Breast epithelium (tissue), 4 donors: ENCODE measurements at regions of chr12 and their contacts with region 1.

Region 1: GRCh38 chr12:88529531-88530488 is 50.5 kb downstream of the KITLG start:
- DNase-seq: no peak
- H3K4me3 ChIP-seq: no peak overlapping the region
- H3K27ac ChIP-seq: peak overlapping the region in 1 of 2 donors; percentile 23
- H3K4me1 ChIP-seq: no peaks in the 10 kb centered on the region
- H3K27me3 ChIP-seq: no peaks in the 10 kb centered on the region
- CTCF ChIP-seq: no peak
- POLR2A ChIP-seq: no peak

Region 2: GRCh38 chr12:86634456-86635410 is 1895.1 kb before region 1 on chr12:
- intact Hi-C with region 1: no loop called
- DNase-seq: no peak
- H3K4me3 ChIP-seq: no peak overlapping the region
- H3K27ac ChIP-seq: no peak overlapping the region
- H3K4me1 ChIP-seq: no peaks in the 10 kb centered on the region
- H3K27me3 ChIP-seq: no peaks in the 10 kb centered on the region
- CTCF ChIP-seq: no peak
- POLR2A ChIP-seq: no peak

Region 3: GRCh38 chr12:88092771-88093170 is 437.0 kb before region 1 on chr12:
- intact Hi-C with region 1: no loop called
- DNase-seq: no peak
- H3K4me3 ChIP-seq: no peak overlapping the region
- H3K27ac ChIP-seq: no peak overlapping the region
- H3K4me1 ChIP-seq: no peaks in the 10 kb centered on the region
- H3K27me3 ChIP-seq: no peaks in the 10 kb centered on the region
- CTCF ChIP-seq: no peak
- POLR2A ChIP-seq: no peak

Region 4: GRCh38 chr12:88218293-88218692 is 311.5 kb before region 1 on chr12:
- intact Hi-C with region 1: no loop called
- DNase-seq: no peak
- H3K4me3 ChIP-seq: no peak overlapping the region
- H3K27ac ChIP-seq: no peak overlapping the region
- H3K4me1 ChIP-seq: no peaks in the 10 kb centered on the region
- H3K27me3 ChIP-seq: no peaks in the 10 kb centered on the region
- CTCF ChIP-seq: no peak
- POLR2A ChIP-seq: no peak

Region 5: DNA sequence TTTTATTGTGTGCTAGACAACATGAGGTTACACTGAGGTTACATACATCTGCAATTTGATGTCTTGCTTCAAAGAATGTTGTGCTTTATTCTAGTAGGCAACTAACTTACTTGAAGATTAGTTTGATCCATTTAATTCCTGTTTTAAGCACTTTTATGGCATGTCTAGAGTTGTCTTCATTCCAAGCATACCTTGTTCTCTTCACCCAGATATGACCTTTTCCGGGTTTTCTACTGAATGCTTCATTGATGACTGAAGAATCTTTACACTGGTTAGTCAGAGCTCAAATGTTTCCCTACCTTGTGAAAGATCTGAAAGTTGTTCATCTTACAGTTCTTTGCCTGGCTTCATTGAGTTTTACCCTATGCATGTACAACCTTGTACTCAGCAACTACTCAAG is 324.4 kb after region 1 on chr12:
- intact Hi-C with region 1: loop called (anchors 5 kb)
- DNase-seq: no peak
- H3K4me3 ChIP-seq: no peak overlapping the region
- H3K27ac ChIP-seq: peak overlapping the region; percentile 32 to 40
- H3K4me1 ChIP-seq: no peaks in the 10 kb centered on the region
- H3K27me3 ChIP-seq: no peaks in the 10 kb centered on the region
- CTCF ChIP-seq: no peak
- POLR2A ChIP-seq: no peak

Region 6: GRCh38 chr12:89212339-89212771 is 682.5 kb after region 1 on chr12:
- intact Hi-C with region 1: no loop called
- DNase-seq: peak in 1 of 2 donors; percentile 45
- H3K4me3 ChIP-seq: no peak overlapping the region
- H3K27ac ChIP-seq: peak overlapping the region; percentile 56 to 60
- H3K4me1 ChIP-seq: no peaks in the 10 kb centered on the region
- H3K27me3 ChIP-seq: no peaks in the 10 kb centered on the region
- CTCF ChIP-seq: no peak
- POLR2A ChIP-seq: no peak